ENCODE measurements at regions of chr14 and their contacts with region 1.

Region 1: DNA sequence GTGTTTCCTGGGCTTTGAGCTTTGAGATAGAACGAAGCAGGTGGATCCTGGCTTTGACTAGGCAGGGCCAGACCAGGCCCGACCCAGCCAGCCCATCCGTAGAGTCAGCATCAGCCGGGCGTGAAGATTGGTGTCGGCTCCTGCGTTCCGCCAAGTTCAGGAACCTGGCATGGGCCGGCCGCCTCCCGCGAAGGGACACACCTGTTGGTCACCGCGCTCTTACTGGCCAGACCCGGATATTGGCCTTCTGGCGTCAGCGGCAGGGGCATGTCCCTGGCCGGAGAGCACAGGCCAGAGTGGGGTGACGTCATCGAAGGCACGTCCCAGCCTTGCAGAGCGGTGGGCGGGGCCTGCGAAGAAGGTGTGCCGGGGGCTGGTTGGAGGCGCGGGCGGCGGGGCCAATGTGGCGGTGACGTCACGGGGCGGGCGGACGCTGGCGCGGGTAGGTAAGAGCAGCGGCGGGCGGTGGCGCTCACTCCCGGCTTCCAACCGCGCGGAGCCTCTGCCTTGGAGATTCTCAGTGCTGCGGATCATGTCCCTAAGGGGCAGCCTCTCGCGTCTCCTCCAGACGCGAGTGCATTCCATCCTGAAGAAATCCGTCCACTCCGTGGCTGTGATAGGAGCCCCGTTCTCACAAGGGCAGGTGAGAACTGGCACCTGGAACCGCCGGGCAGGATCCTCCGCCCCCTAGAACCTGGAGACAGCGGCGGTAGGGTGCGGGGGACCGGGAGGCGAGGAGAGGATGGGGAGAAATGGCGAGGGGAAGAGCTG is at the start of gene ARG2:
- DNase-seq: peak; percentile 99
- H3K4me3 ChIP-seq: peak within 1 kb of the TSS; percentile 67 to 73 (median 68)
- H3K27ac ChIP-seq: peak within 1 kb of the TSS; percentile 71 to 88 (median 84)
- H3K4me1 ChIP-seq: peaks cover 22 to 47% (median 38%) of the 10 kb centered on the region in 4 donors
- H3K27me3 ChIP-seq: no peaks in the 10 kb centered on the region
- CTCF ChIP-seq: no peak
- EP300 ChIP-seq: peak; percentile 20
- POLR2A ChIP-seq: peak; percentile 77
- total RNA-seq, gene ARG2: 5.8 to 15.1 (median 12.9) TPM

Region 2: DNA sequence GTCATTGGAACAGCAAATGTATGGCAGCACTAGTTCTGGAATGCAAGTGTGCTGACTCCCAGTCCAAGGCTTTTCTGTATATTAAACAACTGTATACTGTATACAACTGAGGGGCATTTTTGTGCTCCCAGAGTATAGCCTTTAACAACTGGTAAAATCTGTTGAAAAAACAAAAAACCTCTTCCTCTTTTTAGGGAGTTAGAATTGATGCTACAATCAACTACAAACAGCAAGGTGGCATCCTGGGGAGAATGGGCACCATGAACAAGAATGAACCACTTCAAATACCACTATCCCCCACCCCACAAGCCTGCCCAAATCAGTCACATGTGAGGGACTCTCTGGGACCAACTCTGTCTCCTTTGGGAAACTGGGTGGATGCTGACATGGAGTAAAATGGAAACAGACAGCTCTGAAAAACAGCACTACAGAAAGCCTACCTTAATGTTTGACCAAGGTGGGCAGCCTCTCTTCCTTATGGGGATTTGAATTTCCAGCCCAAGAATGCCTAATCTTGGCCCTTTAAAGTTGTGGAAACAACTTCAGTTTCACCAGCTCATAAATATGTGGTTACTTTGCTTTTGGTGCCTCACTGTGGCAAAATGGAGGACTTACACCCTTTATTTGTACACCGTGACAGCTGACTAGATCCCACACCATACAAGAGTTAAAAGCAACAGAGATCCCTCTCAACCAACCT is 47.3 kb after region 1 on chr14:
- intact Hi-C with region 1: loop called (anchors 2 kb)
- DNase-seq: no peak
- H3K4me3 ChIP-seq: no peak overlapping the region
- H3K27ac ChIP-seq: no peak overlapping the region
- H3K4me1 ChIP-seq: peaks cover 13 to 37% (median 23%) of the 10 kb centered on the region in 4 donors
- H3K27me3 ChIP-seq: no peaks in the 10 kb centered on the region
- CTCF ChIP-seq: peak; percentile 55 to 82 (median 64)
- EP300 ChIP-seq: no peak
- POLR2A ChIP-seq: no peak

Region 3: DNA sequence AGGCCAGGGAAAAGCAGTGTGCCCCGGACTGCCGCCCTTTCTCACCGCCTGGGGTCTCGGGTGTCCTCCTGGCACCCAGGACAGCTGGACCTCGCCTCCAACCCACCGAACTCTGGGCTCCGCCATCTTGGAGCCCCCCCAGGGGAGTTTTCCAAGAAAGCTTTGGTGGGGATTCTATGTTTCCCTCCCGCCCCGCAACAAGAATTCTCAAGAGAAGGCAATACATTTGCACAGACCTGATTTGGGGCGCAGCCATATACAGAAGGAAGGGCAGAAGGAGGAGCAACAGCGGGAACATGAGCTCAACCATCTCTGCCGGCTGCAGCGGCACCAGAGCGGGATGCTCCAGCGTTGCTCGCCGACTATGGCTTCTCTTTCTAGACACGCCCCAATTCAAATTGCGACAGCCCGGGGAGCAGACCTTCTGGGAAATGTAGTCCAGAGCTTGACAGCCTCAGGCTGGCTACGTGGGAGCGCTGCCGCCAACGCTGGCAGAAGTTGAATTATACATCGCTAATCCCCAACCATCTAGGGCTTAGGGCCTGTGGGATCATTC is 75.8 kb after region 1 on chr14 and contains the start of gene RDH11:
- intact Hi-C with region 1: loop called (anchors 5 kb)
- DNase-seq: peak; percentile 95
- H3K4me3 ChIP-seq: peak within 1 kb of the TSS; percentile 69 to 97 (median 90)
- H3K27ac ChIP-seq: peak within 1 kb of the TSS; percentile 83 to 90 (median 88)
- H3K4me1 ChIP-seq: peaks cover 4 to 27% (median 23%) of the 10 kb centered on the region in 4 donors
- H3K27me3 ChIP-seq: no peaks in the 10 kb centered on the region
- CTCF ChIP-seq: no peak
- EP300 ChIP-seq: no peak
- POLR2A ChIP-seq: peak; percentile 57
- total RNA-seq, gene RDH11: 29.9 to 36.9 (median 33.6) TPM

Measured in esophagus muscularis mucosa (tissue), 4 donors.